T-cell (primary cell): ENCODE measurements at regions of chr3 and their contacts with region 1.

Region 1: DNA sequence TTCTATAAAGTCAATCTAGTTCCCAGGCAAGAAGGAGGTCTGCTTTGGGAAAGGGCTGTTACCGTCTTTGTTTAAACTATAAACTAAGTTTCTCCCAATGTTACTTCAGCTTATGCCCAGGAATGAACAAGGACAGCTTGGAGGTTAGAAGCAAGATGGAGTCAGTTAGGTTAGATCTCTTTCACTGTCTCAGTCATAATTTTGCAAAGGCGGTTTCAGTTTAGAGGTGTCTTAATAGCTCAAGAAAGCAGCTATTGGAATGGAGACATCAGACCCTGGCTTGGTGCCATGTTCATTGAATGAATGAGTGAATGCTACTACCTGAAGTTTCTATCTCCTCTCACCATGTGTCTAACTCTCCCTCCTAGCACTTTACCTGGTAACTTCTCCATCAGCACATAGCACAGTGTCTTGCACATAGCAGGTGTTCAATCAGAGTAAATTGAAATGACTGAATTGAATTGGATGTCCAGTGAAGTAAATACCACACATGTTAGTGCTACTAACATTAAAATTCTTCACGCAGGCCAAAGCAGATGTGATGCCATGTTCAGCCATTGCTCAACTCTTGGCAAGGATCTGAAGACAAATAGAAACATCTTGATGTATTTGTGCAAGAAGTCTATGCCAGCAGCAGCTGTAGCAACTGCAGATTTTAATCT is 28.2 kb downstream of the CLEC3B start:
- DNase-seq: no peak
- ATAC-seq: no peak
- H3K4me3 ChIP-seq: no peak overlapping the region
- H3K4me3 Mint-ChIP-seq: no peak overlapping the region
- H3K27ac ChIP-seq: no peak overlapping the region
- H3K27ac Mint-ChIP-seq: no peak overlapping the region
- H3K4me1 ChIP-seq: no peaks in the 10 kb centered on the region
- H3K4me1 Mint-ChIP-seq: peaks cover 4 to 9% (median 6%) of the 10 kb centered on the region in 3 donors
- H3K27me3 ChIP-seq: peaks cover 0 to 10% of the 10 kb centered on the region in 2 experiments
- H3K27me3 Mint-ChIP-seq: peaks cover 14 to 17% of the 10 kb centered on the region in 2 donors

Region 2: GRCh38 chr3:45029661-45030060 is 24.7 kb before region 1 on chr3:
- CTCF ChIA-PET with region 1: no interaction called
- POLR2A ChIA-PET with region 1: no interaction called
- DNase-seq: no peak
- ATAC-seq: no peak
- H3K4me3 ChIP-seq: no peak overlapping the region
- H3K4me3 Mint-ChIP-seq: no peak overlapping the region
- H3K27ac ChIP-seq: no peak overlapping the region
- H3K27ac Mint-ChIP-seq: no peak overlapping the region
- H3K4me1 ChIP-seq: peaks cover 0 to 6% of the 10 kb centered on the region in 2 experiments
- H3K4me1 Mint-ChIP-seq: peaks cover 7 to 11% (median 10%) of the 10 kb centered on the region in 3 donors
- H3K27me3 ChIP-seq: peaks cover 0 to 51% of the 10 kb centered on the region in 2 experiments
- H3K27me3 Mint-ChIP-seq: peaks cover 1 to 7% of the 10 kb centered on the region in 2 donors

Region 3: GRCh38 chr3:45081506-45082141 is 27.3 kb after region 1 on chr3:
- CTCF ChIA-PET with region 1: no interaction called
- POLR2A ChIA-PET with region 1: interaction called in 1 of 2 experiments, 13 read pairs
- DNase-seq: no peak
- ATAC-seq: no peak
- H3K4me3 ChIP-seq: no peak overlapping the region
- H3K4me3 Mint-ChIP-seq: no peak overlapping the region
- H3K27ac ChIP-seq: no peak overlapping the region
- H3K27ac Mint-ChIP-seq: no peak overlapping the region
- H3K4me1 ChIP-seq: no peaks in the 10 kb centered on the region
- H3K4me1 Mint-ChIP-seq: no peaks in the 10 kb centered on the region
- H3K27me3 ChIP-seq: peaks cover 0 to 21% of the 10 kb centered on the region in 2 experiments
- H3K27me3 Mint-ChIP-seq: peaks cover 0 to 1% of the 10 kb centered on the region in 2 donors

Region 4: DNA sequence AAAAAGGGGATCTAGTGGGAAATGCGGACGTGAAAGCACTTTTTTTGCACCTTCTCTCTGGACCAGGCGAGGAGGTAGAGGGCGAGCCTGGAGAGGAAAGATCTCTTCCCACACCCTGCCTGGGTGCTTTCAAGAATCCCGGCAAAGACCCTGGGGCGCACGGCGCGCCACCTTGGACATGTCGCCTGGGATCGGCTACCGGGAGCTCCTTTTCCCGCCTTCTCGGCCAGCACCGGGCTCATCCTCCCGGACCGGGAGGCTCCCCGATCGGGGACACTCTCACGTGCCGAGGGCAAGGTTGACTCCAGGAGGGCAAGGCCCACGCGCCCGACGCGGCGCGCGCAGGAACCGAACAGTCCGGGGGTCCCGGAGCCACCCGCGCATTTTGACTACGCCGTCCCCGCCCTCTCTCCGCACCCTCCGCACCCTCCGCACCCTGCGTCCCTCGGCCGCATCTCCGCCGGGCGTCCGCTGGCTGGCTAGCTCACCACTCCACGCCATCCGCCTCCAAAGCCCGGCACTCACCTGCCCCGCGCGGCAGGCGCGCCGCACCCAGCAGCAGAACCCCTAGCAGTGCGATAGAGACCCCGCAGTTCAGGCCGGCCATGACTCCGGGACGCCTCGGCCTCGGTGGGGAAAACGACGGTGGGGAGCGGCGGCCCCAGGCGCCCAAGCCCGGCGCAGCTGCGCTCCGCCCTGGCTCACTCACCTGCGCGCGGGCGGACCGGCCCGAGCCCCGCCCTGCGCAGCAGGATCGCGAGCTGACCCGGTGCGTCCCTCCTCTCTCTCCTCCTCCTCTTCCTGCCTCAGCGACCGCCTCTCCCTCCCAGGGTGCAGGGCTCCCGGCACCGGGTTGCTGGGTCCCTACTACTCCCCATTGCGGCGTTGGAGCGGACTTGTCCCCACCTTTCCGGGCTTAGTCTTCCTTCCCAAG is 91.6 kb after region 1 on chr3 and contains the start of gene CDCP1:
- CTCF ChIA-PET with region 1: no interaction called
- POLR2A ChIA-PET with region 1: no interaction called
- DNase-seq: no peak
- ATAC-seq: peak in 3 of 4 experiments; percentile 40 to 73 (median 69)
- H3K4me3 ChIP-seq: peak within 1 kb of the TSS; percentile 8 to 93
- H3K4me3 Mint-ChIP-seq: peak within 1 kb of the TSS; percentile 80 to 88 (median 80)
- H3K27ac ChIP-seq: no peak within 1 kb of the TSS
- H3K27ac Mint-ChIP-seq: no peak within 1 kb of the TSS
- H3K4me1 ChIP-seq: peaks cover 5 to 19% of the 10 kb centered on the region in 2 experiments
- H3K4me1 Mint-ChIP-seq: peaks cover 17 to 25% (median 19%) of the 10 kb centered on the region in 3 donors
- H3K27me3 ChIP-seq: peaks cover 0 to 36% of the 10 kb centered on the region in 2 experiments
- H3K27me3 Mint-ChIP-seq: peaks cover 31 to 57% of the 10 kb centered on the region in 2 donors
- total RNA-seq, gene CDCP1: 0.36 to 1.7 (median 0.55) TPM

Region 5: GRCh38 chr3:45333549-45333948 is 279.2 kb after region 1 on chr3:
- CTCF ChIA-PET with region 1: no interaction called
- POLR2A ChIA-PET with region 1: no interaction called
- DNase-seq: no peak
- ATAC-seq: no peak
- H3K4me3 ChIP-seq: no peak overlapping the region
- H3K4me3 Mint-ChIP-seq: no peak overlapping the region
- H3K27ac ChIP-seq: no peak overlapping the region
- H3K27ac Mint-ChIP-seq: no peak overlapping the region
- H3K4me1 ChIP-seq: peaks cover 0 to 2% of the 10 kb centered on the region in 2 experiments
- H3K4me1 Mint-ChIP-seq: peaks cover 7 to 11% (median 9%) of the 10 kb centered on the region in 3 donors
- H3K27me3 ChIP-seq: peaks cover 0 to 43% of the 10 kb centered on the region in 2 experiments
- H3K27me3 Mint-ChIP-seq: peaks cover 19 to 37% of the 10 kb centered on the region in 2 donors